Posterior vena cava (tissue), 2 donors: ENCODE measurements at regions of chr3 and their contacts with region 1.

Region 1: GRCh38 chr3:176219970-176220369 is 977.3 kb downstream of the TBL1XR1 start:
- DNase-seq: no peak

Region 2: DNA sequence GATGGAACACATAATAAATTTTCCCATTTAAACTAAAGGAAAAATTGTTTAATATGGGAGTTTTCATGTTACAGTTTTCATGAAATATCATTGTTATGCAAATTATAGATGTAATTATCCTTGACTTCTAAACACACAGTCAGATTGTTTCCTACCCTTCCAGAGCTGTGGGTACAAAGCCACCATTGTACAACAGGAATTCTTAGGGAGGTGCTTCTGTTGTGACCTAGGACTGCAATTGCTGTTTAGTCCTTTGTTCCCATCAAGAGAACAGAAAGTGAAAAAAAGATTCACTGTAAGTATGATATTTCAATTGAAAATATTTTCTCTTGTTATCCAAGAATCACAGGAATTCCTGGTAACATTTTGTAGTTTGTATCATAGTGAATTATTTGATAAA is 1816.1 kb before region 1 on chr3:
- intact Hi-C with region 1: loop called in 1 of 2 experiments (anchors 5 kb)
- DNase-seq: no peak